ENCODE measurements at regions of chr1 and their contacts with region 1.

Region 1: DNA sequence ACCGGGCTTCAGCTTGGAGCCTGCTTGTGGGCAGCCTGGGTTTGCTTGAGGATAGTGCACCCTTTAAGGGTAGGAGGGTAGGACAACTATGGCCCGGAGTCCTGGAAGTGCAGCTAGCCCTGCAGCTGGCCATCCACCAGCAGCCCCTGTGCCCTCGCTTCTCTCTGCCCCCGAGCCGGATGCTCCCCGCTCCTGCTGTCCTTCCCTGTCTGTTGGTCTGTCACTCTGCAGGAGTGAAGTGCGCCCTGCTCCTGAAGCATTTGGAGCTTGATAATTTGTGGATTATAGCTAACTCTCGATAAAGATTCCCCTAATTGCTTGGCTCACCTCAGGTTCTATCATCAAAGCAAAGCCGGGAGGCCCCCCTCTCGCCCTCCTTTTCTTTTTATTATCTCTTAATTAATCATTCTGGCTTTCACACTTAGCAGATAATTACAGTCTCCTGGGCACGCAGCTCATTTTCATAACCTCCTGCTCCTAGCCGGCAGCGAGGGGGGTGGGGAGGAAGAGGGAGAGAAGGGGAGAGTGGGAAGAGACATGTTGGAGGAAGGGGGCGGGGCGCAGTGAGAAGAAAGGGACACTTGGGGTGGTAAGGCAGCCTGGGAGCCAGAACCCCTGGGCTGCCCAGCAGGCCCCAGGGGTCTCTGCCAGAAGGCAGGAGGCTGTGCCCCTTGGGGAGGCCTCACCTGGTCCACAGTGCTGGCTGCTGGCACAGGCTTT is 14.4 kb downstream of the KIRREL1 start:
- DNase-seq: peak; percentile 36
- H3K4me3 ChIP-seq: no peak overlapping the region
- H3K27ac ChIP-seq: peak overlapping the region; percentile 87
- H3K4me1 ChIP-seq: peaks cover 60% of the 10 kb centered on the region
- H3K27me3 ChIP-seq: no peaks in the 10 kb centered on the region
- CTCF ChIP-seq: no peak
- POLR2A ChIP-seq: no peak

Region 2: GRCh38 chr1:157984469-157984868 is 23.4 kb before region 1 on chr1:
- CTCF ChIA-PET with region 1: no interaction called
- POLR2A ChIA-PET with region 1: no interaction called
- dilution Hi-C with region 1: no loop called
- intact Hi-C with region 1: no loop called
- DNase-seq: no peak
- H3K4me3 ChIP-seq: no peak overlapping the region
- H3K27ac ChIP-seq: no peak overlapping the region
- H3K4me1 ChIP-seq: no peaks in the 10 kb centered on the region
- H3K27me3 ChIP-seq: peaks cover 38 to 43% of the 10 kb centered on the region in 2 experiments
- CTCF ChIP-seq: no peak
- POLR2A ChIP-seq: no peak

Region 3: GRCh38 chr1:158019171-158019868 is 11.5 kb after region 1 on chr1:
- CTCF ChIA-PET with region 1: interaction called, 29 read pairs
- POLR2A ChIA-PET with region 1: interaction called, 12 read pairs
- dilution Hi-C with region 1: no loop called
- intact Hi-C with region 1: loop called (anchors 1 kb)
- DNase-seq: peak; percentile 87
- H3K4me3 ChIP-seq: peak overlapping the region in 1 of 3 experiments; percentile 2
- H3K27ac ChIP-seq: peak overlapping the region; percentile 95
- H3K4me1 ChIP-seq: peaks cover 49% of the 10 kb centered on the region
- H3K27me3 ChIP-seq: no peaks in the 10 kb centered on the region
- CTCF ChIP-seq: no peak
- POLR2A ChIP-seq: peak; percentile 38

Measured in endothelial cell of umbilical vein (primary cell).